GM10248 (cell line): ENCODE measurements at regions of chr14 and their contacts with region 1.

Region 1: DNA sequence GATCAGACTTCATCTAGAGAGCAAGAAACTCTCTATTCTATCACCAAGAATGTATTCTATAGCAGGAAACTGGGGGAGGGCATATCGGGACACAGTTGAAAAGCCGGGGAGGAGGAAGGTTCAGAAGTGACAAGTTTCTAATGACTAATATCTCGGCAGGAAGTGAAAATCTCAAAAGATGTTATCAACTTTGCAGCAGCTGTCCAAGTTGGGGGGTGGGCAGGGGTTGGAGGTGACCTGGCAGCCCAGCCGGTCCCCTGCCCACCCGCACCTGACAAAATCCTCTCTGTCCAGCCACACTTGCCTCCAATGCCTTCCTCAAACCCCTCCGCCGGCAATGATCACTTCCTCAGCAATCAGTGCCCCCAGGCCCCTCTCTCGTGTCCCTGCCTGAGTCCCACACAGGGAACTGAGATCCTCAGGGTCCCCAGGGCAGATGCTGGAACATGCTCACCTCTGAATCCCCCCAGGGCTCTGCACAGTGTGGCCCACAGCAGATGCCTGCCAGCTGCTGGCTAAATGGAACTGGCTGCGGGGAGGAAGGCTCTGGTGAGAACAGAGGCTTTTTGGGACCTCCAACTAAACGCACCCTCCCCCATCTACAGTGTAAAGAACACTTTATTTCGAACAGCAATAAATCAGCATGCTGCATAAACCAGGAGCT is 43.9 kb downstream of the CCDC88C start:
- DNase-seq: peak; percentile 85
- CTCF ChIP-seq: no peak

Region 2: DNA sequence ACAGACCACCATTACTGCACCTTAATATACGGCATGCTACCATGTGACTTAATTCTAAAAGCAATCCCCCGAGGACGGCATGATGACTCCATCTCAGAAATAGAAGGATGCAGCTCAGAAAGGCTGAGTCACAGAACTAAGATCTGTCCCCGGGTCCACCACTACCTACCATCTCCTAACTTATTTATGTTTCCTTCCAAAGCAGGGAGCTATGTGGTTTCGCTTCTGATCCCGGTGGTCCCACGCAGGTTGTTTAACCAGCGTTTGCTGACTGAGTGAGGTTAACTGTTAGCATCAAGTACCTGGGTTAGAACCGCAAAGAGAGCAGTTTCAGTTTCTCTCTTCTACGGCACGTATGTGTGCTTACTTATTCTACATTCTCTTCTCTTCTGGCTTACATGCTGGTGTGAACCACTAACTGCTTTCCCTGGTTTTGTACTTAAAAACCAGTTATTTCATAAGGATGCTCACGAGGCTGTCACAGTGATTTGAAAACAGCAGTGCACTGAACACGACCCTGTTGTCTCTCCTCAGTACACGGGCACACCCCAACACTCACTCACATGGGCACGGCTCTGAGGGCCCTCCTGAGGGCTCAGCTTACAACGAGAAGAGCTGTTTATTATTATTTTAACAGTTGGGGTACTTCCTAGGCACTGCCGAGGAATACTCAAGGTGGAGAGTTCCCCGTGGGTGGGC is 22.8 kb before region 1 on chr14:
- CTCF ChIA-PET with region 1: interaction called, 16 read pairs
- POLR2A ChIA-PET with region 1: interaction called, 4 read pairs
- DNase-seq: peak; percentile 75
- CTCF ChIP-seq: no peak

Region 3: DNA sequence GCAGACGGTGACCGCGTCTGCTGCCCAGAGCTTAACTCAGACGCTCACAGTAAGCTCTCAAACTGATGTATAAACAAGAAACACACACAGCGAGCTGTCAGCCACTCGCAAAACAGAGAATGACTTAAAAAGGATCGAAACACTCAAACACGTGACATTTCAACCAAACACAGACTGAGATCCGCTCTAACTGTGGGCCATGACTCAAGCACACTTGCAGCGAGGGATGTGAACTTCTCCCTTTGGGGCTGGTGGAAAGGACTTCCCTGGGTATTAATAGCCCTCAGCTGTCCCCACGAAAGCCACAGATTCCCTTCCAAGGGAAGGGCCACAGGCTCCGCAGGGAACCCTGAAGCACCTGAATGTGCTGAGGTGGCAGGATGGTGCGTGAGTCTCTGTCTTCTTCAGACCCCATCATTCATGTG is 14.8 kb after region 1 on chr14:
- CTCF ChIA-PET with region 1: interaction called, 14 read pairs
- POLR2A ChIA-PET with region 1: no interaction called
- DNase-seq: peak; percentile 83
- CTCF ChIP-seq: no peak

Region 4: GRCh38 chr14:91396959-91397815 is 23.5 kb after region 1 on chr14:
- CTCF ChIA-PET with region 1: interaction called, 17 read pairs
- POLR2A ChIA-PET with region 1: interaction called, 7 read pairs
- DNase-seq: peak; percentile 76
- CTCF ChIP-seq: no peak

Region 5: GRCh38 chr14:91545946-91546716 is 172.4 kb after region 1 on chr14:
- CTCF ChIA-PET with region 1: no interaction called
- POLR2A ChIA-PET with region 1: no interaction called
- DNase-seq: no peak
- CTCF ChIP-seq: no peak